ENCODE measurements at regions of chr7 and their contacts with region 1.

Region 1: GRCh38 chr7:37448636-37449361 is at the start of gene ELMO1:
- DNase-seq: peak; percentile 90
- H3K4me3 ChIP-seq: peak within 1 kb of the TSS; percentile 59 to 87 (median 86)
- H3K27ac ChIP-seq: peak within 1 kb of the TSS; percentile 32
- H3K4me1 ChIP-seq: peaks cover 21% of the 10 kb centered on the region
- H3K27me3 ChIP-seq: no peaks in the 10 kb centered on the region
- CTCF ChIP-seq: peak; percentile 36 to 78
- POLR2A ChIP-seq: peak; percentile 54
- total RNA-seq, gene ELMO1: 23.5 and 30.6 TPM in 2 replicates

Region 2: GRCh38 chr7:37234928-37235327 is 213.9 kb before region 1 on chr7:
- CTCF ChIA-PET with region 1: interaction called, 5 read pairs
- POLR2A ChIA-PET with region 1: no interaction called
- dilution Hi-C with region 1: no loop called
- intact Hi-C with region 1: loop called (anchors 5 kb)
- DNase-seq: peak; percentile 56
- H3K4me3 ChIP-seq: no peak overlapping the region
- H3K27ac ChIP-seq: no peak overlapping the region
- H3K4me1 ChIP-seq: no peaks in the 10 kb centered on the region
- H3K27me3 ChIP-seq: no peaks in the 10 kb centered on the region
- CTCF ChIP-seq: peak; percentile 40 to 53
- POLR2A ChIP-seq: no peak

Region 3: DNA sequence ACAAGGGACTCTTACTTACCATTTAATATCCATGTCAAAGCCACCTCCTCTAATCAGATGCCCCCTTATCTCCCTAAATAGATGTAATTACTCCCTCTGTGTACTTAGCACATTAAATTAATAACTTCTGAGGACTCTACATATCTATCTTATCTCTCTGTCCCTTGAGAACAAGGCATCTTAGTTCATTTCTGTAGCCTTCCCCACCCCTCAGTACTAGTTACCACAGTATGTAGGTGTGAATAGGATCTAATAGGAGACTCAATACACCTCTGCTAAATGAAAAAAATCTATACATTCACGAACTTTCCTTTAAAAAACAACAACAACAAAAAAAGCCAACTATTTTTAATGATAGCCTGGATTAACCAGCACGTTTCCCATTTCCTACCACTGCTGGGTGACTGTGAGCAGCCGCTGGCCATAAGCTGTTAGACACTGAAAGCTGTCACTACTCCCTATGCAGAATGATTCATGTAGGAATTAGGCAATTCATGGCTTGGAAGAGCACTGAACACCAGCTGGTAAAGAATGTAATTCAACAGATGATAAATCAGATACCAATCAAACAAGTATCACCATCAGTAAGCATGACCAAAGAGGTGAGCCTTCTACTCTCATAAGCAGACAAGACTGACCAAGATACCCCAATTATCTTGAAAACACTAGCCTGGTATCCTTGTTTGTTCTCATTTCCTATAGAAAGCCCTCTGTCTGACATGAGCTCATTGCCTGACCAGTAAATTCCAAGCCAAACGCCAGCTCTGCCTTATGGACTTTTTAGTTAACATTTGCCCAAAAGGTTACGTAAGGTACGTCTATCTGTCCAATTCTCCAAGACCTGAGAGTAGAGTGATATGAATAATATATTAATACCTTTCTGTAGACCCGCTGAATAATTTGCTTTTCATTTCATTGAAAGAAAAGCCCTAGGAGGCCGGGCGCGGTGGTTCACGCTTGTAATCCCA is 128.0 kb before region 1 on chr7:
- CTCF ChIA-PET with region 1: interaction called, 11 read pairs
- POLR2A ChIA-PET with region 1: no interaction called
- dilution Hi-C with region 1: no loop called
- intact Hi-C with region 1: no loop called
- DNase-seq: no peak
- H3K4me3 ChIP-seq: no peak overlapping the region
- H3K27ac ChIP-seq: no peak overlapping the region
- H3K4me1 ChIP-seq: no peaks in the 10 kb centered on the region
- H3K27me3 ChIP-seq: no peaks in the 10 kb centered on the region
- CTCF ChIP-seq: no peak
- POLR2A ChIP-seq: no peak

Region 4: DNA sequence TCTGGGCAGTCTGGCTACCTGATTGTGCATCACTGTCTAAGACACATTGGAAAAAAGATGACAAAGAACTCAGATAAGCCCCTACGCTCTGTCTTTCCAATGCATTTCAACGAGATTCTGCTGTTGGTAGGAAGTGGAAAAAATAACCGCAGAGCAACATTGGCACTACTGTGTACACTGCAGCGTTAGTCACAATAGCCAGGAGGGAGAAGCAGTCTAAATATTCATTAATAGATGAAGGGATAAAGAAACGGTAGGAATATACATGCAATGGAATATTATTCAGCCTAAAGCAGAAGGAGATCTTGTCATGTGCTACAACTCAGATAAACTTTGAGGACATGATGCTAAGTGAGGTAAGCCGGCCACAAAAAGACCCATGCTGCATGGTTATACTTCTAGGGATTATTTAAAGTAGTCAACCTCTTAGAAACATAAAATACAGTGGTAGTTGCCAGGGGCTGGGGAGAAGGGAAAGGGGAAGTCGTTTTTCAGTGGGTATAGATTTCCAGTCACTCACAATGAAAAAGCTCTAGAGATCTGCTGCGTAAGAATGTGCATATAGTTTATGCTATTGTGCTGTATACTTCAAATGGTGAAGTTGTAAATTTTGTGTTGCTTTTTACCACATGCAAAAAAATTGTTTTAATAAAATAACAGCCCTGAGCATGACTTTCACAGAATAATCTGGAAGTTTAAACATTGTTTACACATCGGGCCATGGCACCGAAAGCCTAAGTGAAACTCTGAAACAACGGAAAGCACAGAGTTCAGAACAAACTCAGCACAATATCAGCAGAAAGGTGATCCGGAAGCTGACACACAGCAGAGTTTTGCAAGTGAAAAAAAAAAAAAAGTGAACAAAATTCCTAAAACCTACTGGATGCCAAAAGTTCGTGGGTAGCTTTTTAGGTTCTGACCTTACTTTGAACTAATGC is 40.2 kb before region 1 on chr7:
- CTCF ChIA-PET with region 1: interaction called, 3 read pairs
- POLR2A ChIA-PET with region 1: interaction called, 3 read pairs
- dilution Hi-C with region 1: no loop called
- intact Hi-C with region 1: loop called (anchors 1 kb)
- DNase-seq: peak; percentile 73
- H3K4me3 ChIP-seq: peak overlapping the region in 1 of 3 experiments; percentile 49
- H3K27ac ChIP-seq: no peak overlapping the region
- H3K4me1 ChIP-seq: peaks cover 18% of the 10 kb centered on the region
- H3K27me3 ChIP-seq: no peaks in the 10 kb centered on the region
- CTCF ChIP-seq: no peak
- POLR2A ChIP-seq: no peak

Region 5: GRCh38 chr7:37480041-37481031 is 31.5 kb after region 1 on chr7:
- CTCF ChIA-PET with region 1: interaction called, 13 read pairs
- POLR2A ChIA-PET with region 1: no interaction called
- dilution Hi-C with region 1: no loop called
- intact Hi-C with region 1: no loop called
- DNase-seq: peak; percentile 86
- H3K4me3 ChIP-seq: no peak overlapping the region
- H3K27ac ChIP-seq: peak overlapping the region; percentile 63
- H3K4me1 ChIP-seq: peaks cover 23% of the 10 kb centered on the region
- H3K27me3 ChIP-seq: no peaks in the 10 kb centered on the region
- CTCF ChIP-seq: no peak
- POLR2A ChIP-seq: peak; percentile 40

Region 6: DNA sequence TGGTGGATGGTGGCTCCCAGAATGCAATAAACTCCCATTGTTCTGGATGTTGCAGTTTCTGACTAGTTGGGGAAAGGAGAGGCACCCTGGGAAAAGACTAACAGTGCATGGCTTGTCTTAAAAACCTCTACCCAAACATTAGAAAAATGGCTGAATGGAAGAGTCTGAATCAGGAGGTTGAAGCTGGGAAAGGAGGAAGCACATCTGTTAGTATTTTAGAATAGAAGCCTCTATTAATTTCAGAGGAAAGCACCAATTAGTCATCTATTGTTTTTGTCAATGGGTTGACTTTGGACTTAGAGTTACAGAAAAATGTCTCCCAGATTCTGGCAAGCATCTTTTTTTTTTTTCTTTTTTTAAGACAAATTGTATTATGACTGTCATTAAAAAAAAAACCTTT is 56.0 kb after region 1 on chr7:
- CTCF ChIA-PET with region 1: interaction called, 13 read pairs
- POLR2A ChIA-PET with region 1: no interaction called
- dilution Hi-C with region 1: no loop called
- intact Hi-C with region 1: loop called (anchors 2 kb)
- DNase-seq: peak; percentile 79
- H3K4me3 ChIP-seq: no peak overlapping the region
- H3K27ac ChIP-seq: no peak overlapping the region
- H3K4me1 ChIP-seq: peaks cover 7% of the 10 kb centered on the region
- H3K27me3 ChIP-seq: peaks cover 9 to 11% of the 10 kb centered on the region in 2 experiments
- CTCF ChIP-seq: no peak
- POLR2A ChIP-seq: no peak

Measured in endothelial cell of umbilical vein (primary cell).